ENCODE measurements at regions of chr6 and their contacts with region 1.

Region 1: GRCh38 chr6:139597771-139598755 is 223.6 kb upstream of the CITED2 start:
- DNase-seq: peak; percentile 98
- ATAC-seq: peak; percentile 91
- H3K4me3 ChIP-seq: no peak overlapping the region
- H3K27ac ChIP-seq: peak overlapping the region; percentile 95
- H3K4me1 ChIP-seq: peaks cover 10% of the 10 kb centered on the region
- H3K27me3 ChIP-seq: no peaks in the 10 kb centered on the region
- CTCF ChIP-seq: no peak
- POLR2A ChIP-seq: no peak; the same call in 1 of the 2 replicates
- RAD21 ChIP-seq: peak; percentile 16; the same call in 1 of the 2 replicates

Region 2: GRCh38 chr6:139369568-139370282 is 228.3 kb before region 1 on chr6:
- CTCF ChIA-PET with region 1: interaction called, 10 read pairs
- POLR2A ChIA-PET with region 1: interaction called, 12 read pairs
- dilution Hi-C with region 1: no loop called
- in situ Hi-C with region 1: loop called (anchors 5 kb)
- intact Hi-C with region 1: no loop called
- DNase-seq: peak; percentile 80
- ATAC-seq: 0 out of 2 replicates have a peak, but pooled peaks have one; percentile 2
- H3K4me3 ChIP-seq: no peak overlapping the region
- H3K27ac ChIP-seq: no peak overlapping the region
- H3K4me1 ChIP-seq: peaks cover 7% of the 10 kb centered on the region
- H3K27me3 ChIP-seq: no peaks in the 10 kb centered on the region
- CTCF ChIP-seq: peak; percentile 76
- POLR2A ChIP-seq: 0 out of 2 replicates have a peak, but pooled peaks have one; percentile 33
- RAD21 ChIP-seq: peak; percentile 89

Region 3: DNA sequence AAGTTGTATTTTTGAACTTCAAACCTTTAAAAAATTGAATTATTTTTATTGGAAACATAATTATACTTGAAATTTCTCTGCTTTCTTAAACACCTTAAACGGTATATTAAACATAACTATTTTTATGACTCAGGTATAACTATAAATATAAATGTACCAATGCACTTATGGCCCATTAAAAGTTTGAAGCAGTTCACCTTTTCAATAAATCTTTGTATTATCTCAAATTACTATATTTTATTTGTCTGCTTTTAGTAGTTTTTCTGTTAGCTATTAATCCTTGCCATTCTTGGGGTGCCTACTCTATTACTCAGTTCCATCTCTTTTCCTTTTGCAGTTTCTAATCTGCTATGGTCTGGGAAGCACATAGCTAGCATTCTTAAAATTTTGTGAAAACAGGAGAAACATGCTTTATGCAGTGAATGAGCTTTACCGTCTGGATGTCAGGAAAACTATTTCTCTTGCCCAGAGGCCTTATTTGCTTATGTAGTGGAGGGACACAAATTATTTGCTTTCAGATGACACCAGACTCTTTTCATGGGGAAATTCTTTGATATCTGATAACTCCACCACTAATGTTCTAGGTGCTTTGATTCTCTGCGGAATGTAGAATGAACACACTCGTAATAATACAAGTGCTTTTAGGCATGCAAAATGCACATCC is 155.3 kb after region 1 on chr6:
- CTCF ChIA-PET with region 1: no interaction called
- POLR2A ChIA-PET with region 1: no interaction called
- dilution Hi-C with region 1: no loop called
- in situ Hi-C with region 1: no loop called
- intact Hi-C with region 1: loop called (anchors 5 kb)
- DNase-seq: peak; percentile 77
- ATAC-seq: peak; percentile 75
- H3K4me3 ChIP-seq: no peak overlapping the region
- H3K27ac ChIP-seq: 0 out of 2 replicates have a peak overlapping the region, but pooled peaks have one; percentile 29
- H3K4me1 ChIP-seq: peaks cover 12% of the 10 kb centered on the region
- H3K27me3 ChIP-seq: no peaks in the 10 kb centered on the region
- CTCF ChIP-seq: no peak
- POLR2A ChIP-seq: no peak
- RAD21 ChIP-seq: no peak

Region 4: GRCh38 chr6:139852488-139853140 is 254.6 kb after region 1 on chr6:
- CTCF ChIA-PET with region 1: no interaction called
- POLR2A ChIA-PET with region 1: no interaction called
- dilution Hi-C with region 1: no loop called
- in situ Hi-C with region 1: no loop called
- intact Hi-C with region 1: loop called (anchors 10 kb)
- DNase-seq: peak; percentile 93
- ATAC-seq: peak; percentile 69
- H3K4me3 ChIP-seq: no peak overlapping the region
- H3K27ac ChIP-seq: peak overlapping the region; percentile 23; the same call in 1 of the 2 replicates
- H3K4me1 ChIP-seq: peaks cover 11% of the 10 kb centered on the region
- H3K27me3 ChIP-seq: no peaks in the 10 kb centered on the region
- CTCF ChIP-seq: no peak
- POLR2A ChIP-seq: peak; percentile 55; the same call in 1 of the 2 replicates
- RAD21 ChIP-seq: no peak

Region 5: GRCh38 chr6:139973669-139974344 is 375.7 kb after region 1 on chr6:
- CTCF ChIA-PET with region 1: no interaction called
- POLR2A ChIA-PET with region 1: no interaction called
- dilution Hi-C with region 1: no loop called
- in situ Hi-C with region 1: no loop called
- intact Hi-C with region 1: loop called (anchors 5 kb)
- DNase-seq: peak; percentile 92
- ATAC-seq: peak; percentile 82
- H3K4me3 ChIP-seq: no peak overlapping the region
- H3K27ac ChIP-seq: peak overlapping the region; percentile 63; the same call in 1 of the 2 replicates
- H3K4me1 ChIP-seq: peaks cover 12% of the 10 kb centered on the region
- H3K27me3 ChIP-seq: no peaks in the 10 kb centered on the region
- CTCF ChIP-seq: no peak
- POLR2A ChIP-seq: no peak
- RAD21 ChIP-seq: no peak; the same call in 1 of the 2 replicates

Region 6: DNA sequence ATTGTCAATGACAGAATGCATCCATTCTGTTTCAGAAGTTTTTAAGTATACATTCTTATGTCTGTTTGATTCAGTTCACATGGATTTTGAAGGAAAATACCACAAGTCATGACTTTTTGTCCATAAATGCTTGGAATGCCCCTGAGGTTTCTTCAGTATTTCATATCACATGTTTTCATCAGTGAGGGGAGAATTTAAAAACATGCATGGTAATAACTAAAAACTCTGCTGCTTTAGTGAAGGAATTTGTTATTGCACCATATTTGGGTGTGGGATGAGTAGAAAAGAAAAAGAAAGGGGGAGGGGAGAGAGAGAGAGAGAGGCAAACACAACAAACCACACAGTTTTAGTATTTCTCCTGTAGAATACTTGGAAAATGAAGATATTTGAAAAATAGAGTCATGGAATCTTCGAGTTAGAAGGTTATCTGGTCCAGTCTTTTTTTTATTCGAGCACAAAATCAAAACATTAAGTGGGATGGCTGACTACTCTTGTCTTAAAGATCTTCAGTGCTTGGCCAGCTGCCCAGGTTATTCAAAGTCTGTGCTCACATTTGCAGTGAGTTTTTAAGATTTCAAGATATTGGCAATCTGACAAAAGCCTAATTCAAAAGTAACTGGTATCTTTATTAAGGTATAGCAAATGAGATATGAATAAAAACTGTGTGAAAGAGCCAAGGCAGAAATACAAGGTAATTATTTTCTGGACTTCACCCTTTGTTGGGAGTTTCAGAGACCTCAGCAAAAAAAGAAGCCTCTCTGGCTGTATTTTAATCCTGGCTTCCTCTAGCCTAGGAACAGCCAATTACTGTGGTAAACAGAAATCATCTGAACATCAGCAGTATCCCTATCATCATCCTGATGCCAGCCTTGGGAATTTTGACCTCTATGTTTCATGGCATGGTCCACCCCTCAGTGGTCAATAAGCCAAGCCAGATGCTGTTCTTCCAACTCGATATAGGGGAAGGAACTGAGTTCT is 464.3 kb after region 1 on chr6:
- CTCF ChIA-PET with region 1: no interaction called
- POLR2A ChIA-PET with region 1: no interaction called
- dilution Hi-C with region 1: no loop called
- in situ Hi-C with region 1: loop called (anchors 10 kb)
- intact Hi-C with region 1: loop called (anchors 5 kb)
- DNase-seq: peak; percentile 96
- ATAC-seq: peak; percentile 80
- H3K4me3 ChIP-seq: no peak overlapping the region
- H3K27ac ChIP-seq: peak overlapping the region; percentile 100
- H3K4me1 ChIP-seq: peaks cover 15% of the 10 kb centered on the region
- H3K27me3 ChIP-seq: no peaks in the 10 kb centered on the region
- CTCF ChIP-seq: no peak
- POLR2A ChIP-seq: no peak
- RAD21 ChIP-seq: 0 out of 2 replicates have a peak, but pooled peaks have one; percentile 15